ENCODE measurements at regions of chr3 and their contacts with region 1.

Region 1: DNA sequence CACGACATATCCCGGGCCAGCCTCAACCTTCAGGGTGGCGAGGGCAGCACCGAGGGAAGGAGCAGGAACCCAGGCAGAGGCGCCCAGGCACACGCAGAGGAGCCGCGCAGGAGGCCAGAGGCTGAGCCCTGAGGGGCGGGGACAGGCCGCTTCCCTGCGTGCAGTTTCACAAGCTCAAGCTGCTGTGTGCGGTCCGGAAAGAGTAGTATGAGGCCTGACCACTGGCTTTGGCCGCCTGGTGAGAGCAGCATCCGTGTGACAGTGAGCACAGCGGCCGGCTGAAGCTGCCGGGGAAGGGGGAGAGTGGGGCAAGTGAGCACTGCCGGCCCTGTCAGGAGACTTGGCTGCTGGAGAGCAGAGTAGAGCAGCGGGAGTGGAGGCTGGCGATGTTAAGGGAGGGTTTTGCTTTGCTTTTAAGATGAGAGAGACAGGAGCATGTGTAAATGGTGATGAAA is 8.7 kb downstream of the ZDHHC19 start:
- DNase-seq: no peak
- H3K4me3 ChIP-seq: no peak overlapping the region
- H3K27ac ChIP-seq: no peak overlapping the region
- H3K4me1 ChIP-seq: peaks cover 0 to 6% (median 0%) of the 10 kb centered on the region in 4 experiments; a peak in 2 of 7 replicates
- H3K27me3 ChIP-seq: peaks cover 0 to 7% (median 6%) of the 10 kb centered on the region in 4 experiments; a peak in 5 of 7 replicates
- CTCF ChIP-seq: no peak
- EP300 ChIP-seq: no peak
- POLR2A ChIP-seq: no peak
- RAD21 ChIP-seq: no peak

Region 2: GRCh38 chr3:196047391-196048030 is 155.0 kb before region 1 on chr3:
- CTCF ChIA-PET with region 1: interaction called, 14 read pairs
- POLR2A ChIA-PET with region 1: no interaction called
- DNase-seq: no peak
- H3K4me3 ChIP-seq: no peak overlapping the region
- H3K27ac ChIP-seq: no peak overlapping the region
- H3K4me1 ChIP-seq: no peaks in the 10 kb centered on the region
- H3K27me3 ChIP-seq: no peaks in the 10 kb centered on the region
- CTCF ChIP-seq: no peak
- EP300 ChIP-seq: no peak
- POLR2A ChIP-seq: peak in 1 of 2 experiments; percentile 33; a peak in 1 of 3 replicates
- RAD21 ChIP-seq: no peak

Region 3: GRCh38 chr3:196096382-196096953 is 106.1 kb before region 1 on chr3:
- CTCF ChIA-PET with region 1: interaction called, 63 read pairs
- POLR2A ChIA-PET with region 1: no interaction called
- DNase-seq: no peak
- H3K4me3 ChIP-seq: no peak overlapping the region
- H3K27ac ChIP-seq: no peak overlapping the region
- H3K4me1 ChIP-seq: no peaks in the 10 kb centered on the region
- H3K27me3 ChIP-seq: no peaks in the 10 kb centered on the region
- CTCF ChIP-seq: no peak
- EP300 ChIP-seq: no peak
- POLR2A ChIP-seq: no peak
- RAD21 ChIP-seq: no peak

Region 4: DNA sequence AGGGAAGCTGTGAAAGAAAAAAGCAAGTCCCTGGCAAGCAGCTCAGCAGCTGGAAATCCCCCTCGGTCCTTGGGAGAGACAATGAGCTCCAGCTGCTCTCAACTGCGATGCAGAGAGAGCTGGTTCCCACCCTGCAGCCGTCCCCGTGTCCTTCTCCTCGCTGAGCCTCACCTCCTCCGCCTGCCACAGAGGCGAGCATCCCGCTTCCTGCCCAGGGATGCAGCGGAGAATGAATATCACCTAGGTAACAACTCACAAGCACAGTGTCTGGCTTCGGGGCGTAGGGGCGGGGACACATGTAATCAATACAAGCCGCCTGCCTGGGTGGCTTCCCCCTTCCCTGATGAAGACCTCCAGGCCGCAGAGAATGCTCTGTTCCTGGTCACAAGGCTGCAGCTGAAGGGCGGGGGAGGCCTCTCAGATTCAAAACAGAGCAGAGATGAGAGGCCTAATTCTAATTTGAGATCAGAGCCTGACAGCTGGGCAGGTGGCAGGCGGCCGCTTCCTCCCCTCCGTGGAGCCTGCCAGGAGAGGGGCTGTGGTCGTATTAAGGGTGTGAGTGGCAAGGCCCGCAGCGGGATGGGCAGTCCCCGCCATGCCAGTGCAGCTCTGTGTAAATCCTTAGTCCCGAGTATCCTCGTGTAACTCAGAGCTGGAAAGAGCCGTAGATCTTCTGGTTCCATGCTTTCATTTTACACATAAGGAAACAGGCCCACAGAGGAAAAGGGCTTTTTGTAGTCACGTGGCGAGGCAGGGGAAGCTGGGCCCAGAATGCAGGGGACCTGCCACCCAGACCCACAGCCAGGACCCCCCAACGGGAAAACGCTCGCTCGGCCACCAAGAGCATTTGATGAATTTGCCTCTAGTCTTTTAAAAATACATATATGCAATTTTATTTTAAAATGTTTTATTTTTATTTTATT is 15.6 kb before region 1 on chr3:
- CTCF ChIA-PET with region 1: interaction called, 28 read pairs
- POLR2A ChIA-PET with region 1: no interaction called
- DNase-seq: peak; percentile 56 to 72
- H3K4me3 ChIP-seq: peak overlapping the region in 2 of 4 experiments; percentile 2 to 18; a peak in 3 of 8 replicates
- H3K27ac ChIP-seq: no peak overlapping the region
- H3K4me1 ChIP-seq: peaks cover 0 to 9% (median 6%) of the 10 kb centered on the region in 4 experiments; a peak in 6 of 7 replicates
- H3K27me3 ChIP-seq: no peaks in the 10 kb centered on the region
- CTCF ChIP-seq: no peak
- EP300 ChIP-seq: no peak
- POLR2A ChIP-seq: no peak; a peak in 1 of 3 replicates
- RAD21 ChIP-seq: no peak